Activated CD4-positive, alpha-beta T cell treated with anti-CD3 and anti-CD28 coated beads, Interleukin-2, amount 10 ng/mL, durations not matched to agents 24 days and 14 days (primary cell): ENCODE measurements at regions of chr9 and their contacts with region 1.

Region 1: GRCh38 chr9:84397151-84397728 is 56.7 kb upstream of the SLC28A3 start:
- DNase-seq: peak; percentile 89
- H3K4me3 Mint-ChIP-seq: no peak overlapping the region
- H3K27ac Mint-ChIP-seq: no peak overlapping the region
- H3K4me1 Mint-ChIP-seq: no peaks in the 10 kb centered on the region
- H3K27me3 Mint-ChIP-seq: no peaks in the 10 kb centered on the region

Region 2: DNA sequence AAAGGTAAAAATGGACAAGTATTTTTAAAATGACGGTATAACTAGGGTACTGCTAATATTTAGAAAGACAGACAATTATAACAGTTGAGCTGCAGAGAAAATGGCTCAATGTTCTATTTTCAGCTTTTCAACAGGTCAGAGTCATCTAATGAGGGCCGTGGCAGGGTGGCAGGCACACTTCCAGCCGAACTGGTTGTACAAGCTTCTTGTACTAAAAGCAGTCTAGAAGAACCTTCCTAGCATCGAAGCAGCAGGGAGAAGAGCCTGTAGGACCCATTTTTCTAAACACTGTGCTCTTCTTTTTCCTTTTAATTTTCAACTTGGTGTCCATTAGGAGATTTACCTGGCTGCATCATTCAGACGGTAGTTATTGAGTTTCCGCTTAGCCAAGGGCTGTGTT is 142.3 kb before region 1 on chr9:
- intact Hi-C with region 1: no loop called
- DNase-seq: no peak
- H3K4me3 Mint-ChIP-seq: no peak overlapping the region
- H3K27ac Mint-ChIP-seq: no peak overlapping the region
- H3K4me1 Mint-ChIP-seq: no peaks in the 10 kb centered on the region
- H3K27me3 Mint-ChIP-seq: peaks cover 42% of the 10 kb centered on the region

Region 3: DNA sequence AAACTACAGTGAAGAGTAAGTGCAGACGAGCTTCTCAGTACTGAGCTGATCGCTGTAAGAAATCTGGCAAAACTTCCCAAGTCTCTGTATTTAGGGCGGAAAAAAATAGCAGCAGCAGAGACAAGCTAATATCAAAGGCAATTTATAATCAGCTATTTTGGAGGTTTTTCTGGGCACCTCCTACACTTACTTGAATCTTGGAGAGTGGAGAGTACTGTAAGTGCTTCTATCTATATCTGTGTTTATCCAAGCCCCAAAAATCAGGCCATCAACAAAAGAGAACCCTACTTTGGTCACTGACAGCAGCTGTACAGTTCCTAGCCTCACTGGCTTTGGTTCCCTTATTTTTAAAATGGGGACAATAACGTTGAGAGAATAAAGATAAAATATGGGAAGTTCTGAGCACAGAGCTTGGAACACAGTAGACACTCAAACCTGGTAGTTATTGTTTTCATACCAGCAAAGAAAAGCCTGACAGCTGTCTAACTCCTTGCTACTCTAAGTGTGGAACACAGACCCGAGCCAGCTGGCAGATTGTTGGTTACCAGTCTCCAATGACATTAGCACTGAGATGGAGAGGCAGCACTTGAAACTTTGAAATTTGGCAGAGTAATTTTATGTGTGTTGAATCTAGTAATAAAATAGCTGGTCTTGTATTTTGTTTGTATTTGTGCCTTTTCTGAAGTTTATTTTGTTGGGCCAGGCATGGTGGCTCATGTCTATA is 39.3 kb after region 1 on chr9:
- intact Hi-C with region 1: no loop called
- DNase-seq: no peak
- H3K4me3 Mint-ChIP-seq: no peak overlapping the region
- H3K27ac Mint-ChIP-seq: no peak overlapping the region
- H3K4me1 Mint-ChIP-seq: no peaks in the 10 kb centered on the region
- H3K27me3 Mint-ChIP-seq: no peaks in the 10 kb centered on the region

Region 4: DNA sequence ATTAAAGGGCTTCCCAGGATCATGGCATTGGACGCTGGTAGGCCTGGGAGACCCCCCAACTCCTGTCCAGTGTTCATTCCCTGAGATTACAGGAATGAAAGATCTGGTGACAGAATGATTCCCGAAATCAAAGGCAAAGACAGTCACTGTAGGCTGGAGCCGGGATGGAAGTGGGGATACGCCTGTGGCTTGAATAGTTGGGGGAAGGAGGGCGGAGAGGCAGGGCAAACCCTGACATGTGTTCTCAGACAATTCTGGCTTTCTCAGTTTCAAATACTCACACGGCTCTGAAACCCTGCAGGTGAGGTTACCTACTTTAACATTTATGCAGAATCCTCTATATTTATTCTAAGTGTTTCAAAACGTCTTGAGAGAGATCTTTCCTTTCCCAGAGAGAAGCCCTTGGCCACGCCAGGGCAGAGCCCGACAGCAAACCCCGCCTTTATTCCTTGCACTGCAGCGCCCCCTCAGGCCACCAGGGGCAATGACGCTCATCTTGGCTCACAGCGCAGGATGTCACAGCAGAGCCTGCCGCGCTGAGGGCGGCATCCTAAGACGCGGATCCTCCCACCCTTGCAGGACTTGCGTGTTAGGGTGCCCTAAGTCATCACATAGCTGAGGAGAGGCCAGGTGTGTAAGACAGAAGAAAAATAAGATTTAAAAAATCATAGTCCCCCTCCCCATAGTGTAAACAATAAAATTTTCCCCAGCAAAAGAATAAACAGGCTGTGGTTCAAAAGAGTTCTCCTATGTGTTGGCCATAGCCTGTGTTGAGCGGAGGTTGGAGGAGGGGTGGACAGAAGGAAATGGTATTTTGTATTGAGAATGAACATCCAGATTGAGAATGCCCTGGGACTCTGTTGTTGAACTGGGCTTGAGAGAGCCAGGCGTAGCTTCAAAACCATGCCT is 556.8 kb after region 1 on chr9:
- intact Hi-C with region 1: loop called (anchors 10 kb)
- DNase-seq: peak; percentile 88
- H3K4me3 Mint-ChIP-seq: no peak overlapping the region
- H3K27ac Mint-ChIP-seq: no peak overlapping the region
- H3K4me1 Mint-ChIP-seq: peaks cover 4% of the 10 kb centered on the region
- H3K27me3 Mint-ChIP-seq: peaks cover 2% of the 10 kb centered on the region

Region 5: GRCh38 chr9:85142968-85143367 is 745.7 kb after region 1 on chr9:
- intact Hi-C with region 1: loop called (anchors 2 kb)
- DNase-seq: no peak
- H3K4me3 Mint-ChIP-seq: no peak overlapping the region
- H3K27ac Mint-ChIP-seq: no peak overlapping the region
- H3K4me1 Mint-ChIP-seq: no peaks in the 10 kb centered on the region
- H3K27me3 Mint-ChIP-seq: no peaks in the 10 kb centered on the region

Region 6: DNA sequence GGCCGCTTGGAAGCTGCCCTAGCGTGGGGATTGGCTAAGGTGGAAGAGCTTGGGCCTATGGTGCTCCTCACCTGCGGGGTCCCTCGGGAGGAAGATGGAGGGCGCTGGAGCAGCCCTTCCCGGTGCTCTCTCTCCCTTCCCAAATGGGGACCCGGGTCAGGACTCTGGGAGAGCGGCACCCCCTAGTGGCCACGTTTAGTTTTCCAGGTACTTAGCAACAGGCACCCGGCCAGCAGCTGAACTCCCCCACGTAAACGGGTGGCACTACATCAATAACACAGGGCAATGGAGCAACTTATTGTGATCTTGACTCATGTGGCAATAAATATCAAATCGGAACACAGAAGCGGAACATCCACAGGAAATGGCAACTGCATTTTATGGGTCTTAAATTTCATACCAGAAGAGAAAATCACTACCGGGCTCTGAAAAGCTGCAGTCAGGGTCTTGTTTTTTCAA is 1027.9 kb after region 1 on chr9:
- intact Hi-C with region 1: loop called (anchors 1 kb)
- DNase-seq: peak; percentile 85
- H3K4me3 Mint-ChIP-seq: no peak overlapping the region
- H3K27ac Mint-ChIP-seq: no peak overlapping the region
- H3K4me1 Mint-ChIP-seq: peaks cover 2% of the 10 kb centered on the region
- H3K27me3 Mint-ChIP-seq: peaks cover 7% of the 10 kb centered on the region

Region 7: GRCh38 chr9:85610074-85610860 is 1213.0 kb after region 1 on chr9:
- intact Hi-C with region 1: loop called (anchors 1 kb)
- DNase-seq: peak; percentile 86
- H3K4me3 Mint-ChIP-seq: peak overlapping the region; percentile 33
- H3K27ac Mint-ChIP-seq: no peak overlapping the region
- H3K4me1 Mint-ChIP-seq: peaks cover 4% of the 10 kb centered on the region
- H3K27me3 Mint-ChIP-seq: no peaks in the 10 kb centered on the region